OCI-LY7 (cell line): ENCODE measurements at regions of chr5 and their contacts with region 1.

Region 1: DNA sequence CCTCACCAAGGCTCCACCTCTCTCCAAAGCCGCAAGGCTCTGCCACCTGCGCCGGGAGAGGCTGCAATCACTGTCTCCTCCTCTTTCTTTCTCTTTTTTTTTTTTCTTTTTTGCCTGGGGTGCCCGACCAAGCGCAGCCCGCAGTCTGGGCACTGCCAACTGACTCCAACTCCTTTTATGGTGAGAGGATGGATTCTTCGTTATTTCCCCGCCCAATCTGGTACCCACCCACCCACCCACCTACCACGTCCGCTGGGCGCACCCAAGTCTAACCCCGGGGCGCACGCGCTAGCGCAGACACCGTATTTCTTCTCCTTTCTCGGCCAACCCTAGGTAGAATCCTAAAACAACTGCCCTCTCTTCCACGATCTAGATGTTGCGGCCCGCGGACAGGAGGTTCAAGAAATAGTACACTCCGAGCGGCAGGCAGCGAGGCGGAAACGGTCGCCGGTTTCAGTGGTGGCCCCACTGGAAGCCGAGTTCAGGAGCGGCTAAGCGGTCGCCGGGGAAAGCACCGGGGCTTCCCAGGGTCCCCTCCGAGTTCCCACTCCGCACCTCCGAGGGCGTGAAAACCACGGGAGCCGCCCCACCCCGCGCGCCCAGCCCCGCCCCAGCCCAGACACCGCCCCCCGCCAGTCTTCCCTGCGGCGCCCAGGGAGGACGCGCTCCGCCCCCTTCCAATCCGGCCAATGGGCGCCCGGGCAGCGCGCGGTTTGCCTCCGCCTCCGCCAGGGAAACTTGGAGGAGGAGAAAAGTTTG is 381 bp upstream of the PTGER4 start:
- DNase-seq: peak; percentile 67
- H3K4me3 ChIP-seq: peak overlapping the region; percentile 82
- H3K27ac ChIP-seq: no peak overlapping the region
- H3K4me1 ChIP-seq: peaks cover 15% of the 10 kb centered on the region
- CTCF ChIP-seq: no peak

Region 2: GRCh38 chr5:40033411-40033810 is 645.9 kb before region 1 on chr5:
- CTCF ChIA-PET with region 1: no interaction called
- POLR2A ChIA-PET with region 1: no interaction called
- intact Hi-C with region 1: loop called (anchors 5 kb)
- DNase-seq: peak; percentile 96
- H3K4me3 ChIP-seq: peak overlapping the region; percentile 56
- H3K27ac ChIP-seq: peak overlapping the region; percentile 83
- H3K4me1 ChIP-seq: peaks cover 22% of the 10 kb centered on the region
- CTCF ChIP-seq: no peak

Region 3: GRCh38 chr5:40066616-40067015 is 612.7 kb before region 1 on chr5:
- CTCF ChIA-PET with region 1: no interaction called
- POLR2A ChIA-PET with region 1: no interaction called
- intact Hi-C with region 1: no loop called
- DNase-seq: no peak
- H3K4me3 ChIP-seq: no peak overlapping the region
- H3K27ac ChIP-seq: no peak overlapping the region
- H3K4me1 ChIP-seq: no peaks in the 10 kb centered on the region
- CTCF ChIP-seq: no peak

Region 4: GRCh38 chr5:40378396-40379177 is 300.7 kb before region 1 on chr5:
- CTCF ChIA-PET with region 1: no interaction called
- POLR2A ChIA-PET with region 1: no interaction called
- intact Hi-C with region 1: loop called (anchors 5 kb)
- DNase-seq: no peak
- H3K4me3 ChIP-seq: no peak overlapping the region
- H3K27ac ChIP-seq: no peak overlapping the region
- H3K4me1 ChIP-seq: peaks cover 6% of the 10 kb centered on the region
- CTCF ChIP-seq: no peak

Region 5: DNA sequence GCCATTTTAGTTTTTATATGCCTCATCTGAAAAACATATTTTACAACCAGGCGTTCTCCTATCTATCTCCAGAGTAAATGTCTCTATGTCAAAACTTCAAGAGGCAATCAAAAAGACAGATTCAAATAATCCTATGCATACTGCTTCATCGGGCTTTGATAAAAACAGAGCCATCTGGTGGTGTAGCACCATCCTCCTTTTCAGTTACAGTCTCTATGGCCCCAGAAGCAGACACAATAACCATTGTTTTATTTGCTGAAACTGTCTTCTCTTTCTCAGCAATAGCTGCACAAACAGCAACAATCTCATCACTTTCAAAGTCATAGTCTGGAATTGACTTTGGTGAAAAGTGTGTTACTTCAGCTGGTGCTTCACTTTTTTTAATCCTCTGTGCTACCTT is 36.7 kb after region 1 on chr5:
- CTCF ChIA-PET with region 1: no interaction called
- POLR2A ChIA-PET with region 1: no interaction called
- intact Hi-C with region 1: no loop called
- DNase-seq: no peak
- H3K4me3 ChIP-seq: no peak overlapping the region
- H3K27ac ChIP-seq: no peak overlapping the region
- H3K4me1 ChIP-seq: no peaks in the 10 kb centered on the region
- CTCF ChIP-seq: peak; percentile 53